ENCODE measurements at regions of chr2 and their contacts with region 1.

Region 1: DNA sequence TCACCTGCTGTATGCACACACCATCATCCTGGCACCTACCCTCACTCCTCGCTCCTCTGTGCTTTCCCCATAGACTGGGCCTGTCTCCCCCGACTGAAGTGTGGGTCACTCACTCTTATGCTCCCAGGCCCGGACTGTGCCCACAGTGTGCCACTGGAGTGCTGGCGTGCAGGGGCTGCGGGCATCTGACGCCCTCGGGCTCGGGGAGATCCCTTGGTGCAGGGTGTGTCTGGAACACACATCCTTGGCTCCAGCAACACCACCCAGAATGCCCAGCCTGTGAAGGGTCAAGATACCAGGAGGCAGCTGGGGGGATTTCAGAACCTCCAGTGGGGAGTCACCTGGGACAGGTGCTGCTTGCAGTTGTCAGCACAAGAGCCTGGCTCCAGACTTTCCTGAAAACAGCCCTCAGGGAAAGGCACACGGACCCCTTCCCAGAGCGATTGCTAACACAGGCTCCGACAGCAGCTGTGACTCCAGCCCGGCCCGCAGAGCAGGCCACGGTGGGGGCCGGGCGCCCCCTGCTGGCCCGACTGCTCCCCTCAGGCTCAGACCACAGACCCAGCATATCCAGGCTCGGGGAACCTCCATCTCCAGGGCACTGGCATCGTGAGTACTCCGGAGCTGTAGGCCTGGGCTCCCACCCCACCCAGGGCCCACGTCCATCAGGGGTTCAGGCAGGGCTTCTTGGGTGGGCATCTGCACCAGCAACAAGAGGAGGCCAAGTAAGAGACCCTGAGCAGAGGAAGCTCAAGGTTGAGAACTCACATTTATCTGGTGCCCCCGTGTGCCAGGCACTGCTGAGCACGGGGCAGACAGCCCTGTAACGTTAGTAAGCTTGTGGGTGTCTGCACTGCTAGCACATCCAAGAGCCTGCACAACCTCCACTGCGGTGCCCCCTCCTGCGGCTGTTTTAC is 8.6 kb downstream of the HS1BP3 start:
- DNase-seq: peak; percentile 85
- ATAC-seq: peak; percentile 99
- H3K4me3 Mint-ChIP-seq: no peak overlapping the region
- H3K27ac Mint-ChIP-seq: no peak overlapping the region
- H3K4me1 Mint-ChIP-seq: no peaks in the 10 kb centered on the region
- H3K27me3 Mint-ChIP-seq: no peaks in the 10 kb centered on the region

Region 2: GRCh38 chr2:20135631-20136050 is 506.7 kb before region 1 on chr2:
- CTCF ChIA-PET with region 1: no interaction called
- POLR2A ChIA-PET with region 1: no interaction called
- intact Hi-C with region 1: loop called in 1 of 2 experiments (anchors 10 kb)
- DNase-seq: peak; percentile 72
- ATAC-seq: peak; percentile 71
- H3K4me3 Mint-ChIP-seq: no peak overlapping the region
- H3K27ac Mint-ChIP-seq: no peak overlapping the region
- H3K4me1 Mint-ChIP-seq: no peaks in the 10 kb centered on the region
- H3K27me3 Mint-ChIP-seq: peaks cover 8% of the 10 kb centered on the region

Region 3: DNA sequence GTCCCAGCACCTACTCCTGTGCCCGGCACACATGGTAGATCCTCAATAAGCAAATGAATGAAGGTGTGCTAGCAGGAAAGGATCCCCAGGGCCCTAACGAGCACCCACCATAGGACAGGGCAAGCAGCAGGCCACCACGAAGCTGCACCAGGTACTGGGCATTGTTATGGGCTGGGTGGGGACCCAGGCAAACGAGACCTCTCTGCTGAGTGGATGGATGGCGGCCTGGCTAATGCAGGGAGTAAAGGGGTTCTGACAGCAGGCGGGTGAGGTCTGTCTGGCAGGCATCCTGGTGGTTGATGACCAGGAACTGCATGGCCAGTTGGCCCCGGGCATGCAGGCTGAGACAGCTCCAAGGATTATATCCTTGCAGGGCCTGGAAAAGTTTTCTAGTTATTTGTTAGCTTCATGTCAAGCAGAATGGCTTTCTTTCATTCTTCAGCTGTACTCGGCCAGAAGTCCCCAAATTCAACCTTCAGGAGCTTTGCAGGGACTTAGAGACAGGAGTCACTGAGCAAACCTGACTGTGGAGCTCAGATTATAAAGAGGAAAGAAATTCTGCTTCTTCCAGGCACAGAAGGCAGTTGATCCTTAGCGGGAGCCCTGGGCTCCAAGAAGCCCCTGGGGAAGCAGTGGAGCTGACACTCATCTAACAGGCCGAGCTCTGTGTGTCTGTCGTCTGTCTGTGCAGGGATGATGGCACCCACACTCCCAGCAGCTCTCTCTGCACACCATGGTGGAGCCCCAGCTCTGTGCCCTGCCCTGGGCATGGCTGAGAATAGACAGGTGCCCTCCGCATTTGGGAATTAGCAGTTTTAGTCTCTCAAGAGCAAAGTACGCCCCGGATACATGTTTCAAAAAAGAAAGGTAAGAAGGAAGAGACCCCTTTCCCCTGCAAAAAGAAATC is 468.6 kb before region 1 on chr2:
- CTCF ChIA-PET with region 1: no interaction called
- POLR2A ChIA-PET with region 1: no interaction called
- intact Hi-C with region 1: no loop called
- DNase-seq: no peak
- ATAC-seq: no peak
- H3K4me3 Mint-ChIP-seq: no peak overlapping the region
- H3K27ac Mint-ChIP-seq: no peak overlapping the region
- H3K4me1 Mint-ChIP-seq: no peaks in the 10 kb centered on the region
- H3K27me3 Mint-ChIP-seq: no peaks in the 10 kb centered on the region

Region 4: GRCh38 chr2:20242060-20243006 is 400.0 kb before region 1 on chr2:
- CTCF ChIA-PET with region 1: no interaction called
- POLR2A ChIA-PET with region 1: no interaction called
- intact Hi-C with region 1: loop called in 1 of 2 experiments (anchors 5 kb)
- DNase-seq: peak; percentile 69
- ATAC-seq: peak; percentile 76
- H3K4me3 Mint-ChIP-seq: peak overlapping the region; percentile 38
- H3K27ac Mint-ChIP-seq: no peak overlapping the region
- H3K4me1 Mint-ChIP-seq: peaks cover 4% of the 10 kb centered on the region
- H3K27me3 Mint-ChIP-seq: peaks cover 2% of the 10 kb centered on the region

Region 5: DNA sequence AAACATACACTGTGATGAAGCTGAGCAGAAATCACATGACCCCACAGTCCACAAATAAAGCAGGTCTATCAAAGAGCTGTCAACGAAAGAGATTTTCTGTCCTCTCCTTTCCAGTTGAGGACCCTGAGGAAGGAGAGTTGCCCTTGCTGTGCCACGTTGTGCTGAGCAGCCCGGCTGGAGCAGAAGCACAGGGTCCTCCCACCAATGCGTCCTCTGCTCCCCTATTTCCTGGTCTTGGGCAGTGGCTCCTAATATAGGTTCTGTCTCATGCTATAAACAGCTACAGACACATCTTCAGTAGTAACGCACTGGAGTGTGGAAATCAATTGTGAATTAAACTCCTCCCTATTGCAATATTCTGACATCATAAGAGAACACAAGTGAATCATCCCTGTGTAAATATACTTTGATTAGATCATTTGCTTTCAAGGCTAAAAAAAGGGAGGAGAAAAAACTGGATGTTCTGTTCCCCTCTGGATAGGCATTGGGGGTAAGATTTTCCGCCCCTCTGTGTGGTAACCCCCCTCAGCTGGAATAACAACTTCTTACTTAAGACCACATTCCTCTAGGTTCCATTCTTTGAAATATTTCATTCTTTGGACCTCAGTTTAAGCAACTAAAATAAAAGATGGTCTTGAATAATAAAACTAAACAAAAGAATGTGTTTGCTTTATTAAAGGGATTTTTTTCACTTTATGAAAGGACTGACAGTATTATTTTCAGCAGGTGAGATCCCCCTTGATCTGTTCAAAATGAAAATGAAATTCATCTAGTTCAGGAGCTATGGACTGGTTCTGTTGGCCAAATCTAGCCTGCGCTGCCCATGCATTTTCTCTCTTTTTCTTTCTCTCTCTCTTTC is 203.8 kb before region 1 on chr2:
- CTCF ChIA-PET with region 1: interaction called, 38 read pairs
- POLR2A ChIA-PET with region 1: no interaction called
- intact Hi-C with region 1: loop called (anchors 1 kb)
- DNase-seq: no peak
- ATAC-seq: no peak
- H3K4me3 Mint-ChIP-seq: no peak overlapping the region
- H3K27ac Mint-ChIP-seq: no peak overlapping the region
- H3K4me1 Mint-ChIP-seq: no peaks in the 10 kb centered on the region
- H3K27me3 Mint-ChIP-seq: peaks cover 30% of the 10 kb centered on the region

Region 6: GRCh38 chr2:20446917-20447436 is 195.3 kb before region 1 on chr2 and contains the start of gene RHOB:
- CTCF ChIA-PET with region 1: interaction called, 38 read pairs
- POLR2A ChIA-PET with region 1: interaction called, 5 read pairs
- intact Hi-C with region 1: loop called (anchors 1 kb)
- DNase-seq: peak; percentile 93
- ATAC-seq: peak; percentile 99
- H3K4me3 Mint-ChIP-seq: peak within 1 kb of the TSS; percentile 71
- H3K27ac Mint-ChIP-seq: no peak within 1 kb of the TSS
- H3K4me1 Mint-ChIP-seq: no peaks in the 10 kb centered on the region
- H3K27me3 Mint-ChIP-seq: peaks cover 23% of the 10 kb centered on the region
- total RNA-seq, gene RHOB: 7.5 TPM

Region 7: GRCh38 chr2:20667531-20668401 is 25.5 kb after region 1 on chr2:
- CTCF ChIA-PET with region 1: no interaction called
- POLR2A ChIA-PET with region 1: no interaction called
- intact Hi-C with region 1: no loop called
- DNase-seq: no peak
- ATAC-seq: no peak
- H3K4me3 Mint-ChIP-seq: no peak overlapping the region
- H3K27ac Mint-ChIP-seq: no peak overlapping the region
- H3K4me1 Mint-ChIP-seq: peaks cover 3% of the 10 kb centered on the region
- H3K27me3 Mint-ChIP-seq: peaks cover 61% of the 10 kb centered on the region

Measured in activated CD4-positive, alpha-beta T cell treated with anti-CD3 and anti-CD28 coated beads for 36 hours (primary cell).